ENCODE measurements at regions of chr16 and their contacts with region 1.

Region 1: DNA sequence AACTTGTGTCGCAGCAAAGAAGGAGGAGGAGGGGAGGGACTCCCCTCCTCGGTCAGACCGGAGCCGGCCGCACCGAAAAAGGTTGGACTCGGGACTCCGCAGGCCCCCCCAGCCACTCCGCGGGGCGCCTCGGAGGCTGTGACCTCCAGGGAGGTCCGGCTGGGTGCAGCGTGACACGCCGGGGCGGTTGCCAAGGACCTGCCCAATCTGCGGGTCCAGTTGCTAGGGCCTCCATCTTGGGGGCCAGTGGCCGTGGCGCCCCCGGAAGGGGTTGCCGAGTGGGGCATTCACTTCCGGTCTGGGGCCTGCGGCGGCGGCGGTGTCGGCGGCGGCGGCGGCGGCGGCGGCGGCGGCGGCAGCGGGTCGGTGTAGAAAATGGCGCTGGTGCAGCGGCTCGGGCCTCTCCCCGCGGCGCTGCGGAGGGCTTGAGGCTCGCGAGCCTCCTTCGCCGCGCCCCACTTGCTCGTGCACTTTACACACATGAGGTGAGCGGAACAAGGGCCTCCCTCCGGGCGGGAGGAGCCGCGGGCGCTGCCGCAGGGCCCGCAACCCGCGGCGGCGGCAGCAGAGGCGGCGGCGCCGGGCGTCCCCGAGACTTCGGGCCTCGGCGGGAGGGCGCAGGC is at the start of gene TNRC6A:
- DNase-seq: peak; percentile 96
- H3K4me3 ChIP-seq: peak within 1 kb of the TSS; percentile 78 to 82 (median 79)
- H3K27ac ChIP-seq: peak within 1 kb of the TSS; percentile 94 to 98 (median 96)
- H3K4me1 ChIP-seq: peaks cover 0 to 43% (median 37%) of the 10 kb centered on the region in 4 donors
- H3K27me3 ChIP-seq: no peaks in the 10 kb centered on the region
- CTCF ChIP-seq: no peak
- EP300 ChIP-seq: no peak
- POLR2A ChIP-seq: peak; percentile 60 to 66
- total RNA-seq, gene TNRC6A: 42.8 to 129 (median 64.9) TPM

Region 2: DNA sequence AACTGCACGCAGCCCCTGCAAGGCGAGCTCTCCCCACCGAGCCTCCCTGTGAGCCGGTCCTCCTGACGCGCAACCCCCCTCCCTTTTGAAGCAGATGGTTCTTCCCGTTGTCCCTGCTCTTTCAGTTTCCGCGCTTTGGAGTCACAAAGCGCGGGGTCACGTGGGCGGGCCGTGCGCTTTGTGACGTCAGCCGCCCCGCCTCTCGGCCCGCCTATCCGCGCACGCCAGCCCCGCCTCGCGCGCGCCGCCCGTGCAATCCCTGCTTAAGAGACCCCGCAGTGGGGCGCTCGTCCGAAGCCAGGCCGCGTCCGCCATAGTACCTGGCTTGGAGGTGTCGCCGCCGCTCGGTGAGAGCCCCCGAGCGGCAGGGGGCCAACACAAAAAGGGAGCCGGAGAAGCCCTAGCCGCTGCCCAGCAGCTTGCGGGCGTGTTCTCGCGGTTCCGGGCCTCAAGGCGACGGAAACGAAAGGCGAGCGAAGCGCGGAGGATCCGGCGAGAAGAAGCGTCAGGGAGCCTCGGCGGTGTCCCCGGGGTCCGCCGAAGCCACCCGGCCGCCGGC is 190.1 kb before region 1 on chr16 and contains the start of gene RBBP6:
- intact Hi-C with region 1: loop called (anchors 10 kb)
- DNase-seq: peak; percentile 98
- H3K4me3 ChIP-seq: peak within 1 kb of the TSS; percentile 83 to 99 (median 94)
- H3K27ac ChIP-seq: peak within 1 kb of the TSS; percentile 99 to 100 (median 100)
- H3K4me1 ChIP-seq: peaks cover 0 to 32% (median 30%) of the 10 kb centered on the region in 4 donors
- H3K27me3 ChIP-seq: no peaks in the 10 kb centered on the region
- CTCF ChIP-seq: peak in 1 of 4 experiments; percentile 26
- EP300 ChIP-seq: peak in 2 of 4 donors; percentile 81 to 82
- POLR2A ChIP-seq: peak; percentile 98 to 99
- total RNA-seq, gene RBBP6: 48.7 to 105 (median 69.0) TPM

Region 3: GRCh38 chr16:24668481-24669061 is 60.9 kb before region 1 on chr16:
- intact Hi-C with region 1: loop called (anchors 1 kb)
- DNase-seq: no peak
- H3K4me3 ChIP-seq: no peak overlapping the region
- H3K27ac ChIP-seq: peak overlapping the region; percentile 46 to 88 (median 77)
- H3K4me1 ChIP-seq: peaks cover 0 to 35% (median 34%) of the 10 kb centered on the region in 4 donors
- H3K27me3 ChIP-seq: no peaks in the 10 kb centered on the region
- CTCF ChIP-seq: no peak
- EP300 ChIP-seq: no peak
- POLR2A ChIP-seq: no peak

Region 4: GRCh38 chr16:24700549-24701392 is 28.7 kb before region 1 on chr16:
- intact Hi-C with region 1: loop called (anchors 2 kb)
- DNase-seq: peak; percentile 96
- H3K4me3 ChIP-seq: no peak overlapping the region
- H3K27ac ChIP-seq: peak overlapping the region; percentile 82 to 89 (median 86)
- H3K4me1 ChIP-seq: peaks cover 2 to 37% (median 29%) of the 10 kb centered on the region in 4 donors
- H3K27me3 ChIP-seq: no peaks in the 10 kb centered on the region
- CTCF ChIP-seq: peak in 1 of 4 experiments; percentile 22
- EP300 ChIP-seq: peak; percentile 71 to 98 (median 96)
- POLR2A ChIP-seq: no peak

Region 5: DNA sequence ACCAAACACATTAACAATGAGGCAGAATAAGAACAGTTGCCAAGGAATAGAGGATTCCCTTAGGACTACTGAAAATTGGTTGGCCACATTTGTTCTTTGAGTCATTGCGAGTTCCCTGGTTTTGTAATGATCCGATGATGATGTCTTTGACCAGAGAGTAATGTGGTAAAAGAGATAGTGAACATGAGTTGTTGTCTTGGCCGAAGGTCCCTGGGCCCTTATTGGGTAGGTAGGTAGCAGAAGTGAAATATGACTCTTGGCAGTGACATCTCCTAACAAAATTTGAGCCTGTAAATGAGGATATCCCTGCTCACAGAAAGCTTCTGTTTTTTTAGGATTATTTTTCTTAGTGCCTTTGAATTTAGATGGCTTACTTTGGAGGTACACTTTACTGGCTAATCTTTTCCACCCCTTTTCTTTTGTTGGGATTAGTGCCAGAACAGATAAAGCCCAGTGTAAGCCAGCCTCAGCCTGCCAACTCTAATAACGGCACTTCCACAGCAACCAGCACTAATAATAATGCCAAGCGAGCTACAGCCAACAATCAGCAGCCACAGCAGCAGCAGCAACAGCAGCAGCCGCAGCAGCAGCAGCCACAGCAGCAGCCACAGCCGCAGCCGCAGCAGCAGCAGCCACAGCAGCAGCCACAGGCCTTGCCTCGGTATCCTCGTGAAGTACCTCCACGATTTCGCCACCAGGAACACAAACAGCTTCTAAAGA is 47.2 kb after region 1 on chr16:
- intact Hi-C with region 1: loop called (anchors 5 kb)
- DNase-seq: peak; percentile 75
- H3K4me3 ChIP-seq: no peak overlapping the region
- H3K27ac ChIP-seq: peak overlapping the region; percentile 47 to 80 (median 73)
- H3K4me1 ChIP-seq: peaks cover 0 to 89% (median 72%) of the 10 kb centered on the region in 4 donors
- H3K27me3 ChIP-seq: no peaks in the 10 kb centered on the region
- CTCF ChIP-seq: no peak
- EP300 ChIP-seq: no peak
- POLR2A ChIP-seq: no peak

Region 6: DNA sequence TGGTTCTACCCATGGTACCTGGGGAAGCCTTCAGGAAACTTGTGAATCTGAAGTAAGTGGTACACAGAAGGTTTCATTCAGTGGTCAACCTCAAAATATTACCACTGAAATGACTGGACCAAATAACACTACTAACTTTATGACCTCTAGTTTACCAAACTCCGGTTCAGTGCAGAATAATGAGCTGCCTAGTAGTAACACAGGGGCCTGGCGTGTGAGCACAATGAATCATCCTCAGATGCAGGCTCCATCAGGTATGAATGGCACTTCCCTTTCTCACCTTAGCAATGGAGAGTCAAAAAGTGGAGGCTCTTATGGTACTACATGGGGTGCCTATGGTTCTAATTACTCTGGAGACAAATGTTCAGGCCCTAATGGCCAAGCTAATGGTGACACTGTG is 60.4 kb after region 1 on chr16:
- intact Hi-C with region 1: loop called (anchors 5 kb)
- DNase-seq: no peak
- H3K4me3 ChIP-seq: no peak overlapping the region
- H3K27ac ChIP-seq: no peak overlapping the region
- H3K4me1 ChIP-seq: peaks cover 0 to 71% (median 37%) of the 10 kb centered on the region in 4 donors
- H3K27me3 ChIP-seq: no peaks in the 10 kb centered on the region
- CTCF ChIP-seq: no peak
- EP300 ChIP-seq: no peak
- POLR2A ChIP-seq: no peak

Region 7: DNA sequence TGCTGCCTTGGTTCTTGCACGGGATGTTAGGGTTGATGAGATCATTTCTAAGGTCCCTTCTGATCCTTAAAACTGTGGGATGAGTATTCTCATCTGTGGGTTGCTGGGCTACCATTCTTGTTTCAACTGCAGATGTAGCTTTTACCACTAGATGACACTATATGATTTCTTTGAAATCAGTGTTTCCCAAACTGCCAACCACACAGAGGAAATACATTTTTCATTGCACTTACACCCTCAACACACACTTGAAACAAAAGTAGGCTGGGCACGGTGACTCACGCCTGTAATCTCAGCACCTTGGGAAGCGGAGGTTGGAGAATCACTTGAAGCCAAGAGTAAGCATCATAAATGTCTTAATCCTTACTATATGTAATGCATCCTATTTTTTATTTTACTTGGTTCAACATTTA is 397.4 kb after region 1 on chr16:
- intact Hi-C with region 1: no loop called
- DNase-seq: no peak
- H3K4me3 ChIP-seq: no peak overlapping the region
- H3K27ac ChIP-seq: peak overlapping the region in 1 of 4 donors; percentile 10
- H3K4me1 ChIP-seq: peaks cover 0 to 11% (median 7%) of the 10 kb centered on the region in 4 donors
- H3K27me3 ChIP-seq: no peaks in the 10 kb centered on the region
- CTCF ChIP-seq: peak in 3 of 4 experiments; percentile 41 to 56 (median 52)
- EP300 ChIP-seq: no peak
- POLR2A ChIP-seq: no peak

Region 8: DNA sequence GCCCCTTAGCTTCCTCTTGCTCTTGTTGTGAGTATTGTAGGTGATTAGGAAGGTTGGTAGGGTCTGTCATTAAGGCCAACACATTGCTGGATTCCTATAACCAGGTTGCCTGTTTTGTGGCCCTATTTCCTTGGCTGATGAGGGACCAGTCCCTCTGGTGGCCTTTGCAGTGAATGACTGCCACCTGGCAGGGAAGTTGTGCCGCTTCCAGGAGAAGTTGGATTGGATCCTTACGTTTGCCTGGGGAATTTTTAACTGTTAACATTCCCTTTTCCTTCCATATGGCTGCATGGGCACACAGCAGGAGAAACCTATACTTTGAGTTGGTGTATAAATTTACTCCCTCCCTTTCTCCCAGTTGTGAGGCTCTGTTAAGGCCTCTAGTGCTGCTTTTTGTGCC is 414.5 kb after region 1 on chr16:
- intact Hi-C with region 1: no loop called
- DNase-seq: no peak
- H3K4me3 ChIP-seq: no peak overlapping the region
- H3K27ac ChIP-seq: no peak overlapping the region
- H3K4me1 ChIP-seq: peaks cover 0 to 26% (median 25%) of the 10 kb centered on the region in 4 donors
- H3K27me3 ChIP-seq: no peaks in the 10 kb centered on the region
- CTCF ChIP-seq: no peak
- EP300 ChIP-seq: no peak
- POLR2A ChIP-seq: no peak